Esophagus muscularis mucosa (tissue), 4 donors: ENCODE measurements at regions of chr20 and their contacts with region 1.

Region 1: GRCh38 chr20:44609511-44610312 is 27.3 kb downstream of the PKIG start:
- DNase-seq: peak; percentile 96
- H3K4me3 ChIP-seq: peak overlapping the region; percentile 29 to 53 (median 43)
- H3K27ac ChIP-seq: peak overlapping the region; percentile 84 to 92 (median 88)
- H3K4me1 ChIP-seq: peaks cover 40 to 61% (median 56%) of the 10 kb centered on the region in 4 donors
- H3K27me3 ChIP-seq: no peaks in the 10 kb centered on the region
- CTCF ChIP-seq: peak; percentile 98 to 100 (median 99)
- EP300 ChIP-seq: no peak
- POLR2A ChIP-seq: no peak

Region 2: DNA sequence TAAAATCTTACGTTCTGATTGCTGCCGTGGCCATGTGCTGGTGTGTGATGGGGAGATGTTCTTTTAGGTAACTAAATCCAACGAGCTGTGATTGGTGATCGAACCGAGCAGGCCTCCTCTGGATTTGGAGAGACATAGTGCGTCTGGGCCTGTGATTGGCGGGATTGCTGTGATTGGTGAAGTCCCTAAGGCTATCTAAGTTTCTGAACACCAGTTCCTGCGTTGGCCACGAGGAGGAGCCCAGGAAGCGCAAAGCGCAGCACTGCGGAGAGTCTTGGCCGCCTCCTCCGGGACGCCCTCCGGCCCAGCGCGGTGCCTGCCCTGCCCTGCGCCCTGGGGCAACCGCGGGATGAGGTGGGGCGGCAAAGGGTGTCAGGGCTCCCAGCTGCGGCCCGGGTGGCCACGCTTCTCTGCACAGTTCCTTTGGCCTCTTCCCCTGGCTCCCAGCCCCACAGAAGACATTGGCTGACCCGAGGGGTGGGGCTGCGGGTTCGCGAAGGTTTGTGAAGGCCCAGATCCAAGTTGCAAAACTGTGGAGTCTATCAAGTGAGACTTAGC is 221.2 kb before region 1 on chr20:
- intact Hi-C with region 1: loop called (anchors 10 kb)
- DNase-seq: no peak
- H3K4me3 ChIP-seq: peak overlapping the region in 1 of 4 donors; percentile 7
- H3K27ac ChIP-seq: no peak overlapping the region
- H3K4me1 ChIP-seq: peaks cover 0 to 9% (median 8%) of the 10 kb centered on the region in 4 donors
- H3K27me3 ChIP-seq: peaks cover 0 to 55% (median 0%) of the 10 kb centered on the region in 4 donors
- CTCF ChIP-seq: peak; percentile 49 to 84 (median 64)
- EP300 ChIP-seq: no peak
- POLR2A ChIP-seq: no peak

Region 3: DNA sequence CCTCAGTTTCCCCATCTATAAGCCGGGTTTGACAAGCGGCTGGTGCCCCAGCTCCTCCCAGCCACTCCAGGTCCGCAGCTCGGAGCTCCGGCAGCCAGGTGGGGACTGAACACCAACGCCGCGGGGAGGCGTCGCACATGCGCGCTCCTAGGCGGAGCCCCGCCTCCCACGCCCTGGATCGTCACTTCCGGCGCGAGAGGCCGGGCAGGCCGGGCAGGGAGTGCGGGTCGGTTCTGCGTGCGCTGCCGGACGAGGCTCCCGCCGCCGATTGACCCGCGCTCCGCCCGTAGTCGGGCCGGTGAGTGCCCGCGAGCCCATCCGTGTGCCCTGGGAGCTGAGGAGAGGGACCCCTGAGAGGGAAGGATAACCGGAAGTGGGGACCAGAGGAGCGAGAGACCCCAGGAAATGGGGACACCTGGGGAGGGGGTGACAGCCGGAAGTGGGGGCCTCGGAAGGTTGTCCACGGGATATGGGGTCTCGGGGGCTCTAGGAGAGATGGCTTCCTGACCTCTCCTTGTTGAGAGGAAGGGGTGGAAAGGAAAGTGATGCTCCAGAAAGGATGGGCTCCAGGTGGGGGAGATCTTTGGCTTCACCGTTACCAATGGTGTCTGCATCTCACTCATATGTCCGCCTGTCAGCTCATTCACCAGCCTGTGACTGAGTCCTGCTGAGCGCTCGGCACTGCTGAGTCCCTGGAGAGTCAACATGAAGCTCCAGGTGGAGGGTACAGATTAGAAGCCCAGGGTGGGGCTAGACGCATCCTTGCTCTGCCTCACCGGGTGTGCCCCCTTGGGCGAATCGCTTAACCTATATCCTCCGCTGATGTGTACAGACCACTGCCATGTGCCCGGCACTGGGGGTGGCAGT is 133.8 kb before region 1 on chr20 and contains the start of gene TTPAL:
- intact Hi-C with region 1: loop called (anchors 2 kb)
- DNase-seq: peak; percentile 94
- H3K4me3 ChIP-seq: peak within 1 kb of the TSS; percentile 75 to 87 (median 78)
- H3K27ac ChIP-seq: peak within 1 kb of the TSS; percentile 92 to 96 (median 94)
- H3K4me1 ChIP-seq: peaks cover 9 to 23% (median 20%) of the 10 kb centered on the region in 4 donors
- H3K27me3 ChIP-seq: no peaks in the 10 kb centered on the region
- CTCF ChIP-seq: peak; percentile 45 to 70 (median 57)
- EP300 ChIP-seq: no peak
- POLR2A ChIP-seq: peak; percentile 98
- total RNA-seq, gene TTPAL: 9.6 to 18.2 (median 13.0) TPM

Region 4: DNA sequence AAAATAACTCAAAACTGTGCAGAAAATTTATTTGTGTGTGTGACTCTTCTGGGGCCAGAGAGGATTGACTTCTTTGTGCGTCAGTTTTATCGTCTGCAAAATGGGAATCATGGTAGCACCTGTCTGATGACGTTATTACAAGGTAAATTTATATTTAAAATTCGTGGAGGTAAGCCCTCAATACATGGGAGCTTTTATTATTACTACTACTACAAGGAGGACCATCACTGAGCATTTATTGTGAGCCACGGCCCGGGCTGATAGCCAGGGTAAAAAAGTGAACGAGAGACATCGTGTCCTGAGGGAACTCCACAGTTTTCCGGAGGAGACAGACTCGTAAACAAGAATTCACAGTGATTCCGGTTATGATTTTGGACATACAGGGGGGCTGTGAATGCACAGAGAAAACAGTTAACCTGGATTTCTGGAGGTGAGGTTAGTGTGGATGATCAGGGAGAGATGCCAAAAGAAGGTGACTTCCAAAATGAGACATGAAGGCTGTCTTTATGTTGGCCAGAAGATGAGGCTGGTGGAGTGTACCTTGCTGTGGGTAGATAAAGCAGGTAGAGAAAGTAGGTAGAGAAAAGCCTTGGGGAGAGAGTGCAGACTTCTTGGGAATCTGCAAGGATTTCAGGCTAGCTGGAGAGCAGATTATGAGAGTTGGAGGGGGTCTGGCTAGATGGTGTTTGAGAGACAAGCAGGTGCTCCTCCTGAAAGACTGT is 77.3 kb before region 1 on chr20:
- intact Hi-C with region 1: loop called (anchors 2 kb)
- DNase-seq: no peak
- H3K4me3 ChIP-seq: peak overlapping the region; percentile 81 to 89 (median 87)
- H3K27ac ChIP-seq: peak overlapping the region; percentile 83 to 91 (median 88)
- H3K4me1 ChIP-seq: peaks cover 5 to 60% (median 50%) of the 10 kb centered on the region in 4 donors
- H3K27me3 ChIP-seq: no peaks in the 10 kb centered on the region
- CTCF ChIP-seq: no peak
- EP300 ChIP-seq: no peak
- POLR2A ChIP-seq: no peak

Region 5: GRCh38 chr20:44733341-44734069 is 123.8 kb after region 1 on chr20:
- intact Hi-C with region 1: loop called (anchors 10 kb)
- DNase-seq: no peak
- H3K4me3 ChIP-seq: no peak overlapping the region
- H3K27ac ChIP-seq: peak overlapping the region in 2 of 4 donors; percentile 41 to 78
- H3K4me1 ChIP-seq: peaks cover 37 to 76% (median 59%) of the 10 kb centered on the region in 4 donors
- H3K27me3 ChIP-seq: no peaks in the 10 kb centered on the region
- CTCF ChIP-seq: peak; percentile 95 to 99 (median 97)
- EP300 ChIP-seq: no peak
- POLR2A ChIP-seq: no peak